Mammary epithelial cell (primary cell): ENCODE measurements at regions of chr1 and their contacts with region 1.

Region 1: GRCh38 chr1:160844447-160845232 is 18.0 kb downstream of the CD244 start:
- DNase-seq: peak; percentile 61
- H3K4me3 ChIP-seq: no peak overlapping the region
- H3K27ac ChIP-seq: no peak overlapping the region
- H3K4me1 ChIP-seq: no peaks in the 10 kb centered on the region
- H3K27me3 ChIP-seq: no peaks in the 10 kb centered on the region
- CTCF ChIP-seq: no peak

Region 2: GRCh38 chr1:160437432-160438316 is 407.0 kb before region 1 on chr1:
- CTCF ChIA-PET with region 1: no interaction called
- dilution Hi-C with region 1: no loop called
- in situ Hi-C with region 1: no loop called
- intact Hi-C with region 1: no loop called
- DNase-seq: no peak
- H3K4me3 ChIP-seq: no peak overlapping the region
- H3K27ac ChIP-seq: no peak overlapping the region
- H3K4me1 ChIP-seq: no peaks in the 10 kb centered on the region
- H3K27me3 ChIP-seq: peaks cover 3% of the 10 kb centered on the region
- CTCF ChIP-seq: no peak

Region 3: GRCh38 chr1:160494620-160495019 is 350.0 kb before region 1 on chr1:
- CTCF ChIA-PET with region 1: no interaction called
- dilution Hi-C with region 1: no loop called
- in situ Hi-C with region 1: no loop called
- intact Hi-C with region 1: no loop called
- DNase-seq: no peak
- H3K4me3 ChIP-seq: no peak overlapping the region
- H3K27ac ChIP-seq: no peak overlapping the region
- H3K4me1 ChIP-seq: no peaks in the 10 kb centered on the region
- H3K27me3 ChIP-seq: no peaks in the 10 kb centered on the region
- CTCF ChIP-seq: peak; percentile 20 to 45

Region 4: DNA sequence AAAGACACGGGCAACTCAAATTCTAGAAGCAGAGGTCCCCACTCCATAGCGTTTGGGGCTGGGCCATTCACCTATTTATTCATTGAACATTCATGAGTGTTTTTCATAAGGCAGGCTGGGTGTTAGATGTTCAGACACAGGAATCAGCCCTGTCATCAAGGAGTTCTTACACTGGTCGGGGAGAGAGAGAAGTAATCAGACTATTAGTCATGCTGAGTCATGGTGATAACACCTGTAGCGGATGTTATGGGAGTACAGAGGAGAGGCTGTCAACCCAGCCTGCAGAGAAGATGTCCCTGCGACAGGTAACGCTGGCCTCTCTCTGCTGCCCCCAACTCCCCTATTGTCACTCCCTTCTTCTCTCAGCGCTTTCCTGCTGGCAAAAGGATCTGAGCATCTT is 31.4 kb before region 1 on chr1:
- CTCF ChIA-PET with region 1: no interaction called
- dilution Hi-C with region 1: loop called (anchors 5 kb)
- in situ Hi-C with region 1: no loop called
- intact Hi-C with region 1: no loop called
- DNase-seq: peak; percentile 92
- H3K4me3 ChIP-seq: no peak overlapping the region
- H3K27ac ChIP-seq: no peak overlapping the region
- H3K4me1 ChIP-seq: peaks cover 10% of the 10 kb centered on the region
- H3K27me3 ChIP-seq: no peaks in the 10 kb centered on the region
- CTCF ChIP-seq: no peak

Region 5: GRCh38 chr1:160862203-160863060 is 17.8 kb after region 1 on chr1 and contains the start of gene CD244:
- CTCF ChIA-PET with region 1: no interaction called
- dilution Hi-C with region 1: no loop called
- in situ Hi-C with region 1: no loop called
- intact Hi-C with region 1: no loop called
- DNase-seq: peak; percentile 25
- H3K4me3 ChIP-seq: no peak within 1 kb of the TSS
- H3K27ac ChIP-seq: no peak within 1 kb of the TSS
- H3K4me1 ChIP-seq: no peaks in the 10 kb centered on the region
- H3K27me3 ChIP-seq: no peaks in the 10 kb centered on the region
- CTCF ChIP-seq: no peak
- total RNA-seq, gene CD244: not detected

Region 6: GRCh38 chr1:160916666-160917065 is 72.0 kb after region 1 on chr1:
- CTCF ChIA-PET with region 1: no interaction called
- dilution Hi-C with region 1: loop called (anchors 5 kb)
- in situ Hi-C with region 1: no loop called
- intact Hi-C with region 1: no loop called
- DNase-seq: no peak
- H3K4me3 ChIP-seq: no peak overlapping the region
- H3K27ac ChIP-seq: no peak overlapping the region
- H3K4me1 ChIP-seq: no peaks in the 10 kb centered on the region
- H3K27me3 ChIP-seq: no peaks in the 10 kb centered on the region
- CTCF ChIP-seq: no peak

Region 7: GRCh38 chr1:161531986-161532643 is 687.5 kb after region 1 on chr1:
- CTCF ChIA-PET with region 1: no interaction called
- dilution Hi-C with region 1: no loop called
- in situ Hi-C with region 1: no loop called
- intact Hi-C with region 1: no loop called
- DNase-seq: no peak
- H3K4me3 ChIP-seq: no peak overlapping the region
- H3K27ac ChIP-seq: no peak overlapping the region
- H3K4me1 ChIP-seq: peaks cover 3% of the 10 kb centered on the region
- H3K27me3 ChIP-seq: no peaks in the 10 kb centered on the region
- CTCF ChIP-seq: no peak